GM12878 (cell line): ENCODE measurements at regions of chr21 and their contacts with region 1.

Region 1: GRCh38 chr21:41648591-41649031 is 118.2 kb downstream of the RIPK4 start:
- DNase-seq: no peak
- ATAC-seq: peak; percentile 89
- H3K4me3 ChIP-seq: no peak overlapping the region
- H3K27ac ChIP-seq: no peak overlapping the region
- H3K4me1 ChIP-seq: no peaks in the 10 kb centered on the region
- H3K27me3 ChIP-seq: no peaks in the 10 kb centered on the region; a peak in 1 of 4 replicates
- CTCF ChIP-seq: no peak
- EP300 ChIP-seq: no peak
- POLR2A ChIP-seq: no peak
- RAD21 ChIP-seq: no peak

Region 2: DNA sequence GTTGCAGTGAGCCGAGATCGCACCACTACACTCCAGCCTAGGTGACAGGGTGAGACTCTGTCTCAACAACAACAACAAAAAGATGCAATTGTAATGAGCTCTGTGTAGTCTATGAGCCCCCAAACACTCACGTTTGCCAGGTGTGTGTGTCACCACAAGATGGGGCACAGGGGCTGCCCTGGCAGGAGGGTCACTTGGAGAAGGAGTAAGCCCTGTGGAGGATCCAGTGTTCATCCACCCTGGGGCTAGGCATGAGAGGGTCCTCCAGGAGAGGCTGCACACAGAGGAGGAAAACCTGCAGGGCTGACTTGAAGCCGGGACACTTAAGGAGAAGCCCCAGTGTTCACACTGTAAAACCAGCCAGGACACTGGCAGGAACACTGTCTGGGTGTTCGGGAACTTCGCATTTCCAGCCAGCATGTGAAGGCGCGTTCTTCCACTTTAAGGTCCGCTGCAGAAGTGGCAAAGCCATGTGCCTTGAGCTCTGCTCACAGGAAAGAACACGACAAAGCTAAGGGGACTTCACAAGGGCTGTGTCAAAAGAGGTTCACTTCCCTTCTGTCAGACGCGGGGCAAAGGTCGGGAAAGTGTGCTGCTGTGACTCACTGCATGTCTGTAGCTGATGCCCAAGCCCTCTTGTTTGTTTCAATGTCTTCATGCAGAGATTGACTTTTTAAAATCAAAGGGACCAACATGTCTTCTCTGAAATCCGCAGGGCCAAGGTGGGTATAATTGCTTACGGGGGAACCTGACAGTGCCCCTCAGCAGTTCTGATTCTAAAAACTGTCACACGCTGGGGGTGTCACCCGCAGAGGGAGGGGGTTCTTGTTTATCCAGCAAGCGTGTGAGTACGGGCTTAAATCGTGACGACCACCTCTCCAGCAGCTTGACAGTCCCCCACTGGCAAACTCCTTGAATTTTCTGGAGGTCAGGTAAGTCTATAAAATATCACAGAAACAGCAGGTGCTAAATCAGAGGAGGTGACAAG is 15.5 kb after region 1 on chr21:
- CTCF ChIA-PET with region 1: no interaction called
- POLR2A ChIA-PET with region 1: no interaction called
- RAD21 ChIA-PET with region 1: interaction called, 22 read pairs
- SMC1A ChIA-PET with region 1: interaction called, 7 read pairs
- in situ Hi-C with region 1: no loop called
- intact Hi-C with region 1: no loop called
- DNase-seq: peak; percentile 26
- ATAC-seq: peak; percentile 88
- H3K4me3 ChIP-seq: no peak overlapping the region
- H3K27ac ChIP-seq: no peak overlapping the region
- H3K4me1 ChIP-seq: no peaks in the 10 kb centered on the region
- H3K27me3 ChIP-seq: peaks cover 2 to 3% of the 10 kb centered on the region in 2 experiments; a peak in 3 of 4 replicates
- CTCF ChIP-seq: no peak
- EP300 ChIP-seq: no peak
- POLR2A ChIP-seq: no peak
- RAD21 ChIP-seq: no peak